ENCODE measurements at regions of chr15 and their contacts with region 1.

Region 1: GRCh38 chr15:40108855-40109735 is at the start of gene BMF:
- DNase-seq: peak; percentile 99
- H3K4me3 ChIP-seq: peak within 1 kb of the TSS; percentile 61 to 79 (median 72)
- H3K27ac ChIP-seq: peak within 1 kb of the TSS; percentile 37
- H3K4me1 ChIP-seq: peaks cover 10% of the 10 kb centered on the region
- H3K27me3 ChIP-seq: peaks cover 4 to 19% of the 10 kb centered on the region in 2 experiments
- CTCF ChIP-seq: peak; percentile 35 to 48
- POLR2A ChIP-seq: no peak
- total RNA-seq, gene BMF: 9.8 and 13.9 TPM in 2 replicates

Region 2: GRCh38 chr15:39934397-39935071 is 174.6 kb before region 1 on chr15:
- CTCF ChIA-PET with region 1: no interaction called
- POLR2A ChIA-PET with region 1: no interaction called
- dilution Hi-C with region 1: no loop called
- intact Hi-C with region 1: loop called (anchors 5 kb)
- DNase-seq: peak; percentile 47
- H3K4me3 ChIP-seq: peak overlapping the region; percentile 33 to 77 (median 57)
- H3K27ac ChIP-seq: peak overlapping the region; percentile 92
- H3K4me1 ChIP-seq: peaks cover 22% of the 10 kb centered on the region
- H3K27me3 ChIP-seq: no peaks in the 10 kb centered on the region
- CTCF ChIP-seq: no peak
- POLR2A ChIP-seq: no peak

Region 3: DNA sequence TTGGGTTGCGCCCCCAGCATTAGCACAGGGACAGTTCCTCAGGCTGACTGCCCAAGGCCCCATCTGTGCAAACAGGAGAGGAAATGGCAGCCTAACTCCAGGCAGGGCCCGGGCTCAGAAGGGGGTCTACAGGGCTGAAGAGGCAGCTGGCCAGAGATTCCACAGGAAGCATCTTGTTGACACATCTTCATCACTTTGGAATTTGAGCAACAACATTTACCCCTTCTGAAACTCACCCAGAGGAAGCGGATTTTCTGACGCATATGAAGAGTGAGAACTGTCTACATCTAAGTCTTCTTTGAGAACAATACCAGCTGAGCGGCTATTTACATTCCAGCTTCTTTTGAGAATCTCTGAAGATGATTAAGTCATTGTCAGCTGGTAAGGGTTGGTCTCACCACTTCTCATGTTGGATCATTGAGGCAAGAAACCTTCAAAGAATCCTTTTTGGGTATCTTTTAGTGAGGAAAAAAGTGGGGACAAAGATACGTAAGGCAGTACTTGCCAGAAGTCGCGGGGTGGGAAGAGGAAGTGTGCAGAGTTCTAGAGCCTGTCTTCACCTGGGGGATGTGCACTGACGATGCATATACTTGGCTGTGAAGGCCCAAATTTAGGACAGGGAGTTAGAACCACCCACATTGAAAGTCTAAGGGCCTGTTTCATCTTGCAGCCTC is 44.7 kb before region 1 on chr15:
- CTCF ChIA-PET with region 1: interaction called, 10 read pairs
- POLR2A ChIA-PET with region 1: no interaction called
- dilution Hi-C with region 1: no loop called
- intact Hi-C with region 1: no loop called
- DNase-seq: peak; percentile 51
- H3K4me3 ChIP-seq: no peak overlapping the region
- H3K27ac ChIP-seq: peak overlapping the region; percentile 77
- H3K4me1 ChIP-seq: peaks cover 22% of the 10 kb centered on the region
- H3K27me3 ChIP-seq: no peaks in the 10 kb centered on the region
- CTCF ChIP-seq: no peak
- POLR2A ChIP-seq: no peak

Region 4: GRCh38 chr15:40081691-40082194 is 27.4 kb before region 1 on chr15:
- CTCF ChIA-PET with region 1: interaction called, 12 read pairs
- POLR2A ChIA-PET with region 1: interaction called, 4 read pairs
- dilution Hi-C with region 1: no loop called
- intact Hi-C with region 1: no loop called
- DNase-seq: peak; percentile 92
- H3K4me3 ChIP-seq: peak overlapping the region in 1 of 3 experiments; percentile 47
- H3K27ac ChIP-seq: peak overlapping the region; percentile 81
- H3K4me1 ChIP-seq: peaks cover 28% of the 10 kb centered on the region
- H3K27me3 ChIP-seq: no peaks in the 10 kb centered on the region
- CTCF ChIP-seq: no peak
- POLR2A ChIP-seq: peak; percentile 67

Region 5: DNA sequence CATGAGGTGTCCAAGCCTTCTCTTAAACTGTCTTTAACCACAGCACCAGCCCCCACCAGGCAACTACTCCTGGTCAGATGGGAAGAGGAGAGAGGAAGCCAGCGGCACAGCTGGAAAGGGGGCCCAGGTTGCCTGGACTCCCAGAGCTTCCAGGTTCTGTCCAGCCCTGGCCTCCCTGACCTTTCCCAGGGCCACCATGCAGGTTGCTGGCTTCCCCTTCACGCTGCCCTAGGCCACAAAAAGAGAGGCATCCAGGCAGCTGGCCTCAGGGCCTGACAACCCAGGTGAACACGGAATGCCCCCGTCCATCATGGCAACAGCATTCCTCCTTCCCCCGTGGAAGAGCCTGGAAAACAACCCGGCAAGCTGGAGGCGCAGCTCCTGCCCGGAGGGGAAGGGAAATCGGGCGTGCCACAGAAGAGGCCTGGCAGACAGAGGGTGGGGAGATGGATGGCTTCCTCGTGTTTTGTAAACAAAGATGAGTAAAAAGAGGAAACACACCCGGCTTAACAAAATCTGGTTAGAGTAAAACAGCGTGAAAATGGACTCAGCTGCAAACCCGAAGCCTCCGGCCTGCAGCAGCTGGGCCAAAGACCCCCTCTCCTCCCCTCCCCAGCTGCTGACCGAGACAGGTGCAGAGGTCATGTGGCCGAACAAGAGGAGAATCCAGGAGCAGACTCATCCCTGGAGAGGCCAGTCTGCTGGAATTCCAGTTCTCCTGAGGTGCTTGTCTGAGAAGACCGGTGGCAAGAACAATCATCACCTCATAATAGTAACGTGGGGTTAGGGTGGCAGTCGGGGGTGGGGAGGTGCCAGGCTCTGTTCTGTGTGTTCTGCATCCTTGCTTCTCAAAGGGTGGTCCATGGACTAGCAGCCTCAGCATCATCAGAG is 15.9 kb before region 1 on chr15:
- CTCF ChIA-PET with region 1: interaction called, 15 read pairs
- POLR2A ChIA-PET with region 1: no interaction called
- dilution Hi-C with region 1: no loop called
- intact Hi-C with region 1: no loop called
- DNase-seq: no peak
- H3K4me3 ChIP-seq: no peak overlapping the region
- H3K27ac ChIP-seq: no peak overlapping the region
- H3K4me1 ChIP-seq: peaks cover 18% of the 10 kb centered on the region
- H3K27me3 ChIP-seq: no peaks in the 10 kb centered on the region
- CTCF ChIP-seq: no peak
- POLR2A ChIP-seq: no peak

Region 6: GRCh38 chr15:40098489-40099261 is 10.4 kb before region 1 on chr15:
- CTCF ChIA-PET with region 1: interaction called, 30 read pairs
- POLR2A ChIA-PET with region 1: interaction called, 4 read pairs
- dilution Hi-C with region 1: no loop called
- intact Hi-C with region 1: no loop called
- DNase-seq: peak; percentile 97
- H3K4me3 ChIP-seq: no peak overlapping the region
- H3K27ac ChIP-seq: peak overlapping the region; percentile 91
- H3K4me1 ChIP-seq: peaks cover 46% of the 10 kb centered on the region
- H3K27me3 ChIP-seq: no peaks in the 10 kb centered on the region
- CTCF ChIP-seq: no peak
- POLR2A ChIP-seq: no peak

Region 7: GRCh38 chr15:40160689-40161688 is 51.9 kb after region 1 on chr15 and contains the start of gene BUB1B:
- CTCF ChIA-PET with region 1: interaction called, 11 read pairs
- POLR2A ChIA-PET with region 1: no interaction called
- dilution Hi-C with region 1: no loop called
- intact Hi-C with region 1: loop called (anchors 1 kb)
- DNase-seq: peak; percentile 96
- H3K4me3 ChIP-seq: peak within 1 kb of the TSS; percentile 67 to 92 (median 71)
- H3K27ac ChIP-seq: peak within 1 kb of the TSS; percentile 24
- H3K4me1 ChIP-seq: peaks cover 15% of the 10 kb centered on the region
- H3K27me3 ChIP-seq: peaks cover 3 to 4% of the 10 kb centered on the region in 2 experiments
- CTCF ChIP-seq: no peak
- POLR2A ChIP-seq: peak; percentile 39
- total RNA-seq, gene BUB1B: 65.6 and 69.8 TPM in 2 replicates

Region 8: GRCh38 chr15:40232625-40233070 is 123.6 kb after region 1 on chr15:
- CTCF ChIA-PET with region 1: no interaction called
- POLR2A ChIA-PET with region 1: no interaction called
- dilution Hi-C with region 1: no loop called
- intact Hi-C with region 1: no loop called
- DNase-seq: no peak
- H3K4me3 ChIP-seq: no peak overlapping the region
- H3K27ac ChIP-seq: no peak overlapping the region
- H3K4me1 ChIP-seq: no peaks in the 10 kb centered on the region
- H3K27me3 ChIP-seq: no peaks in the 10 kb centered on the region
- CTCF ChIP-seq: no peak
- POLR2A ChIP-seq: no peak

Region 9: GRCh38 chr15:40333922-40334492 is 224.9 kb after region 1 on chr15:
- CTCF ChIA-PET with region 1: no interaction called
- POLR2A ChIA-PET with region 1: no interaction called
- dilution Hi-C with region 1: no loop called
- intact Hi-C with region 1: no loop called
- DNase-seq: peak; percentile 98
- H3K4me3 ChIP-seq: no peak overlapping the region
- H3K27ac ChIP-seq: peak overlapping the region; percentile 80
- H3K4me1 ChIP-seq: peaks cover 39% of the 10 kb centered on the region
- H3K27me3 ChIP-seq: no peaks in the 10 kb centered on the region
- CTCF ChIP-seq: no peak
- POLR2A ChIP-seq: peak; percentile 32

Region 10: GRCh38 chr15:40754883-40755811 is 646.1 kb after region 1 on chr15 and contains the start of gene RMDN3:
- CTCF ChIA-PET with region 1: no interaction called
- POLR2A ChIA-PET with region 1: no interaction called
- dilution Hi-C with region 1: no loop called
- intact Hi-C with region 1: no loop called
- DNase-seq: peak; percentile 94
- H3K4me3 ChIP-seq: peak within 1 kb of the TSS; percentile 70 to 82 (median 71)
- H3K27ac ChIP-seq: peak within 1 kb of the TSS; percentile 71
- H3K4me1 ChIP-seq: peaks cover 8% of the 10 kb centered on the region
- H3K27me3 ChIP-seq: no peaks in the 10 kb centered on the region
- CTCF ChIP-seq: no peak
- POLR2A ChIP-seq: peak; percentile 81
- total RNA-seq, gene RMDN3: 35.9 and 37.2 TPM in 2 replicates

Measured in endothelial cell of umbilical vein (primary cell).